ENCODE measurements at regions of chr14 and their contacts with region 1.

Region 1: GRCh38 chr14:34098045-34098984 is 147.4 kb upstream of the EGLN3 start:
- DNase-seq: peak in 8 of 10 donors; percentile 24 to 91 (median 62)

Region 2: GRCh38 chr14:33839193-33840076 is 258.9 kb before region 1 on chr14:
- intact Hi-C with region 1: loop called (anchors 2 kb)
- DNase-seq: peak in 8 of 10 donors; percentile 44 to 89 (median 65)

Region 3: GRCh38 chr14:33943096-33943884 is 155.0 kb before region 1 on chr14:
- intact Hi-C with region 1: loop called (anchors 5 kb)
- DNase-seq: peak in 7 of 10 donors; percentile 24 to 82 (median 38)

Region 4: GRCh38 chr14:33986804-33987203 is 111.5 kb before region 1 on chr14:
- intact Hi-C with region 1: no loop called
- DNase-seq: no peak

Measured in posterior cingulate gyrus (tissue), 11 donors.